A549 (cell line): ENCODE measurements at regions of chr15 and their contacts with region 1.

Region 1: GRCh38 chr15:43510200-43511011 is 7.0 kb upstream of the MAP1A start:
- DNase-seq: peak; percentile 80 to 96
- ATAC-seq: peak; percentile 97
- H3K4me3 ChIP-seq: peak overlapping the region; percentile 56
- H3K27ac ChIP-seq: peak overlapping the region; percentile 82 to 87
- H3K4me1 ChIP-seq: peaks cover 18% of the 10 kb centered on the region
- CTCF ChIP-seq: no peak
- EP300 ChIP-seq: no peak
- POLR2A ChIP-seq: peak; percentile 33
- RAD21 ChIP-seq: no peak

Region 2: DNA sequence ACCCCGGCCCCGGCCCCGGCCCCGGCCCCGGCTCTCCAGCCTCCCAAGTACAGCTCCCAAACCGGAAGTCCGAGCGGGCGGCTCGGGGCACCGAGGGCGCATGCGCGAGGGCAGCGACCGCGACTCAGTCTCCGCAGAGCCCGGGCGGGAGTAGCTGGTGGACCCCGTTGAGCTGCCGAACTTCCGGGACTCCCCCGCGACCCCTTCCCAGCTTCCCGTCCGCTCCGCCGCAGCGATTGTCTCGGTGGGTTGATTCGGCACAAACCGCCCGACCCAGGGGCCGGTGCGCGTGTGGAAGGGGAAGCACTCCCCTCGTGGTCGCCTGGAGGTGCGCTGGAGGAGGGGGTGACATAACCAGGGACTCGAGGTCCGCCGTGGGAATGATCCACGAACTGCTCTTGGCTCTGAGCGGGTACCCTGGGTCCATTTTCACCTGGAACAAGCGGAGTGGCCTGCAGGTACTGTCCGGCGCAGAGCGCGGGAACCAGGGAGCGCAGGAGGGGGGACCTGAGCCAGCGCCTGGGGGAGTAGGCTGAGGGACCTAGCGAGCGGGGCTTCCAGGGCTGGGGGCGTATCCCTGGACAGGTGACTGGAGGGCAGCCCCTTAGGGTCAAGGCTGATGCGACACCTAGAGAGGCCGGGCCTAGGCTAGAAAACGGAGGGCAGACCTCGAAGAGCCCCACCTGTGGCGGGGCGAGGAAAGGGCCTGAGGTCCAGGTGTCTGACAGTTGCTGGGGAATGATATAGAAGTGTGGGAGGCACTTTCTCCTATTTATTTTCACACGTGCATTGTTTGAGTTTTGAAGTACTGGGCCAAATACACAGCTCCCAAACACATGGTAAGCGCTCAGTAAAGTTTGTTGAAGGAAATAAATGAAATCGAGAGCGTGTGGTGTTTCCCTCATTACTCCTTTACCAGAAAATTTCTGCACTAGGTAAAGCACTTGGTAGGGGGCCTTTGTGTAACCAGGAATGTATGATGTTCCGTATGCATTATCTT is 139.1 kb before region 1 on chr15 and contains the starts of genes TUBGCP4 and ZSCAN29:
- CTCF ChIA-PET with region 1: no interaction called
- POLR2A ChIA-PET with region 1: no interaction called
- DNase-seq: peak; percentile 76
- ATAC-seq: peak; percentile 95 to 97
- H3K4me3 ChIP-seq: peak within 1 kb of the TSS; percentile 96
- H3K27ac ChIP-seq: peak within 1 kb of the TSS; percentile 92 to 96
- H3K4me1 ChIP-seq: peaks cover 12% of the 10 kb centered on the region; the same call in 2 of the 3 replicates
- CTCF ChIP-seq: peak; percentile 16; the same call in 2 of the 3 replicates
- EP300 ChIP-seq: no peak
- POLR2A ChIP-seq: peak; percentile 58
- RAD21 ChIP-seq: no peak
- polyA plus RNA-seq, gene TUBGCP4: 10.4 and 12.4 TPM in 2 replicates
- polyA plus RNA-seq, gene ZSCAN29: 10.7 and 13.8 TPM in 2 replicates

Region 3: DNA sequence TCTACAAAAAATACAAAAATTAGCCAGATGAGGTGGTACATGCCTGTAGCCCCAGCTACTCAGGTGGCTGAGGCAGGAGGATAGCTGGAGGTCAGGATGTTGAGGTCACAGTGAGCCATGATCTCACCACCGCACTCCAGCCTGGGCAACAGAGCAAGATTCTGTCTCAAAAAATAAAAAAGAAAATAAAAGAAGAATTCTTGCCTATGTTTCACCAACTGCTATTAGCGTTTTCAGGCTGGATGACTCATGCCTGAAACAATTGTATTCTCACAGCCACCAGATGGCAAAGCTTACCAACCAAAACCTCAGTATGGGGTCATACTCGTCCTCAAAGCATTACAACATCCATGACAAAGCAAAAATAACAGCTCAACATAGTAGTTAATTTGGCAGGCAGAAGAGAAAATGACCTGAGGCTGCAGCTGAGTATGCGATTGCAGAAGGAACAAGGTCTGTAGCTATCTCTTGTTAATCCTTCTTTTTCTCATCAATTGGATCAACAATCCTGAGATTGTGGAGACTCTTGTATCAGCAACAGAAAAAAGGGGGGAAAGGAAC is 69.6 kb before region 1 on chr15:
- CTCF ChIA-PET with region 1: interaction called, 30 read pairs
- POLR2A ChIA-PET with region 1: interaction called, 10 read pairs
- DNase-seq: peak; percentile 76 to 89
- ATAC-seq: peak; percentile 99 to 100
- H3K4me3 ChIP-seq: no peak overlapping the region
- H3K27ac ChIP-seq: peak overlapping the region; percentile 73 to 92
- H3K4me1 ChIP-seq: peaks cover 22% of the 10 kb centered on the region
- CTCF ChIP-seq: peak; percentile 60
- EP300 ChIP-seq: no peak
- POLR2A ChIP-seq: no peak
- RAD21 ChIP-seq: peak; percentile 71 to 81

Region 4: DNA sequence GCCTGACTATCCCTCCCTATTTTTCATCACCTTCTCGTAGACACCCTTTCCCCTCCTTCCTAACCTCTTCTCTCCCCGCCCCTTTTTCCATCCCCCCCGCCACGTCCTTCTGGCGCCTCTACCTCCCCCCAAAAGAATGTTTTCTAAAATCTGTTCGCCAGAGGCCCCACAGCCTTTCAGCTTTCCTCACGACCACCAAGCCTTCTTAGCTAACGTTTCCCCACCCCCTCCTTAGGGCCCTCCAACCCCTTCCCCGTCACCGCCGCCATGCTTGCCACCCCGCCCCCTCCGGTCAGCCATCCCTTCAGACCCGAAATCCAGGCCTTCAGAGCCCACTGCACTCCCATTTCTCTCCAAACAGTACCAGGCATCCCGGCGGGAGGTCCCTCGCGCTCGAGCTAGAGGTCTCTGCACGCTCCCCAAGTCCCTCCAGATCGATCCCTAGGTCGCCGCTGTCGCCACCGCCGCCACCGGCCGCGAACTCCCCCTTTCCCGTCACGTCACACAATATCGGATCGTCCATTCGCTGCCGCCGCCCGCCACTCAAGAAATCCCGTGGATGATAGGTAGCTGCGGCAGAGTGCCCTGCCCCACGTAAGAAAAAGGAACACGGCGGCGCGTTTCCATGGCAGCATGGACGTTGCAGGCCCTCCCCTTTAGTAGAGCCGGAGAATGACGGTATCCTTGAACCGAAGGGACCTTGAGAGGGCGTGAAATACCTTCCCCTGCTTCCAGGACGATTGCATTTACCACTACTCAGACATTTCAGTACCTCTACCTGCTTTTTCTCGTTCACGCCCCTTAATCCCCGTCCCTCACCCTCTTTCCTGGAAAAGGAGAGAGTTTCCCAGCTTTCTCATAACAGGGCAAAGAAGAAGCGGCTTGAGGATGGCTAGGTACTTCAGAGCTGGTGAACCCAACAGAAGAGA is 17.5 kb before region 1 on chr15 and contains the start of gene TP53BP1:
- CTCF ChIA-PET with region 1: interaction called, 20 read pairs
- POLR2A ChIA-PET with region 1: interaction called, 22 read pairs
- DNase-seq: peak; percentile 91 to 94
- ATAC-seq: peak; percentile 100
- H3K4me3 ChIP-seq: peak within 1 kb of the TSS; percentile 62
- H3K27ac ChIP-seq: peak within 1 kb of the TSS; percentile 85 to 98
- H3K4me1 ChIP-seq: peaks cover 12% of the 10 kb centered on the region; the same call in 2 of the 3 replicates
- CTCF ChIP-seq: no peak
- EP300 ChIP-seq: no peak
- POLR2A ChIP-seq: peak; percentile 29
- RAD21 ChIP-seq: no peak
- polyA plus RNA-seq, gene TP53BP1: 49.8 and 56.4 TPM in 2 replicates